Activated naive CD4-positive, alpha-beta T cell treated with anti-CD3 and anti-CD28 coated beads for 36 hours (primary cell): ENCODE measurements at regions of chr18 and their contacts with region 1.

Region 1: DNA sequence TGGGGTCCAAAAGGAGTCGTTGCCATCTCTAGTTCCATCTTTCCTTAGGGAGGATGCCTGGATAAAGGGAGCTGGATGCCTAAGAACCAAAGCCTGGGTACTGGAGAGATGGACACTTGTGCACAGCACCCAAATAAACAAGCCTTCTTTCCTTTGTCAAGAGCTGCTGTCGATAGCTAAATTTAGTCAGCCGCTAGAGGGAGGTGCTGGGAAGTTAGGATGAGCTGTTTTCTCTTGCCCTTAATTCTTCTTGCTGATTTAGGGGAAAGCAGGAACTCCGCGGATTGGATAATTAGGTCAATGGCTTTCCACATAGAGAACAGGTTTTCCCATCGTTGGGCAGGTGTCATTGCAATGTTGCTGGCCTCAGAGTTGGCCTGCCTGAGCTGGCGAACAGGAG is 30.9 kb upstream of the SERPINB12 start:
- DNase-seq: peak; percentile 34
- H3K4me3 Mint-ChIP-seq: no peak overlapping the region
- H3K27ac Mint-ChIP-seq: no peak overlapping the region
- H3K4me1 Mint-ChIP-seq: no peaks in the 10 kb centered on the region
- H3K27me3 Mint-ChIP-seq: peaks cover 18% of the 10 kb centered on the region

Region 2: DNA sequence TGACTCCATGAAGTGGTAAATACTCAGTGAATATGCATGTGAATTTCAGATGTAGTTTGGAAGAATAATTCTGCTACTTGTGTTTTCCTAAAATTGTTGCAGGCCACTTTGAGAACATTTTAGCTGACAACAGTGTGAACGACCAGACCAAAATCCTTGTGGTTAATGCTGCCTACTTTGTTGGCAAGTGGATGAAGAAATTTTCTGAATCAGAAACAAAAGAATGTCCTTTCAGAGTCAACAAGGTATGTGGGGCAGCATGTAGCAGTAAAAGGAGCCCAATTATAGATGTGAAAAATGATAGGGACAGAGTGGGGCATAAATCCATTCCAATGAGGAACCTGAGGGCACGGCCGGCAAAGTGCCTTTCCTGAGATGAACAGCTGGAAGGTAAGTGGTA is 18.4 kb before region 1 on chr18:
- CTCF ChIA-PET with region 1: interaction called, 13 read pairs
- intact Hi-C with region 1: no loop called
- DNase-seq: no peak
- H3K4me3 Mint-ChIP-seq: no peak overlapping the region
- H3K27ac Mint-ChIP-seq: no peak overlapping the region
- H3K4me1 Mint-ChIP-seq: no peaks in the 10 kb centered on the region
- H3K27me3 Mint-ChIP-seq: peaks cover 3% of the 10 kb centered on the region